ENCODE measurements at regions of chr11 and their contacts with region 1.

Region 1: DNA sequence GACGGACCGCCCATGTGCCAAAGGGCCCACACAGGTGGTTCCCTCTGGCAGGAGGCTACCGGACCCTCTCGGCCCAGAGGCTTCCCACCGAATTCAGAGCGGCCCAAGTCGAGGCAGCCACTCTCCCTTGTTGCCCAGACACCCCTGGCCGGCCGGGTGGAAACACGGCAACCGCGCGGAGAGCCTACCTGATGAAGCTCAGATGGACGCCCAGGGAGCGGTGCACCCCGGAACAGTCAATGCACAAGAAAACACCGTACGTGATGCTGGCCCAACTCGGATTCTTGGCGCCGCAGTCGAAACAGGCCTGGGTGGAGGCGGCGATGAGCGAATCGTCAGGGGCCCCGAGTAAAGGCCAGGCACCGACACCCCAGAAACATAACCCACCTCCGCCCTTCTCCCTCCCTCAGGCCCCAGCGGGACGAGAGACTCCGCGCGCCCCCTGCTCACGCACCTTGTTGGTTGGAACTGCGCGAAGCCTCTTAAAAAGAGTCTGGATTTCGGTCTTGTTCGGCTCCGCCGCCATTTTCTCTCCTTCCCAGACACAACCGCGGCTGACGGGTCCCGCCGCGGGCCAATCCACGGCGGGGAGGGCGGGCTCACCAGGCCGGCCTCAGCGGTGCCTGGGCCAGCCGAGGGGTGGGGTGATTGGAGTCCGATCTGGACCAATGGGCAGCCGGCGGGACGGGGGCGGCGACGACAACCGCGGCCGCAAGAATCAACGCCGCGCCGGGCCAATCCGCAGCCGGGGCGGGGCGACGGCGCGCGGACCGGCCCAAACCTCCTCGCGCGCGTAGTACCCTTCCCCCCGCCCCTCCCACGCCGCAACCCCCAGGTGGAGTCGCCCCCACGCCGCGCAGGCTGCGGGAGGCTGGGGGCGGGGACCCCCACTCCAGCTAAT is at the start of gene ARFGAP2:
- DNase-seq: peak; percentile 100
- H3K4me3 ChIP-seq: peak within 1 kb of the TSS; percentile 72
- H3K27ac ChIP-seq: peak within 1 kb of the TSS; percentile 93
- H3K4me1 ChIP-seq: peaks cover 16% of the 10 kb centered on the region
- H3K27me3 ChIP-seq: no peaks in the 10 kb centered on the region
- CTCF ChIP-seq: no peak
- total RNA-seq, gene ARFGAP2: 179 and 206 TPM in 2 replicates

Region 2: GRCh38 chr11:47143322-47143721 is 33.3 kb before region 1 on chr11:
- CTCF ChIA-PET with region 1: interaction called, 13 read pairs
- POLR2A ChIA-PET with region 1: no interaction called
- intact Hi-C with region 1: no loop called
- DNase-seq: no peak
- H3K4me3 ChIP-seq: no peak overlapping the region
- H3K27ac ChIP-seq: no peak overlapping the region
- H3K4me1 ChIP-seq: no peaks in the 10 kb centered on the region
- H3K27me3 ChIP-seq: no peaks in the 10 kb centered on the region
- CTCF ChIP-seq: no peak

Region 3: DNA sequence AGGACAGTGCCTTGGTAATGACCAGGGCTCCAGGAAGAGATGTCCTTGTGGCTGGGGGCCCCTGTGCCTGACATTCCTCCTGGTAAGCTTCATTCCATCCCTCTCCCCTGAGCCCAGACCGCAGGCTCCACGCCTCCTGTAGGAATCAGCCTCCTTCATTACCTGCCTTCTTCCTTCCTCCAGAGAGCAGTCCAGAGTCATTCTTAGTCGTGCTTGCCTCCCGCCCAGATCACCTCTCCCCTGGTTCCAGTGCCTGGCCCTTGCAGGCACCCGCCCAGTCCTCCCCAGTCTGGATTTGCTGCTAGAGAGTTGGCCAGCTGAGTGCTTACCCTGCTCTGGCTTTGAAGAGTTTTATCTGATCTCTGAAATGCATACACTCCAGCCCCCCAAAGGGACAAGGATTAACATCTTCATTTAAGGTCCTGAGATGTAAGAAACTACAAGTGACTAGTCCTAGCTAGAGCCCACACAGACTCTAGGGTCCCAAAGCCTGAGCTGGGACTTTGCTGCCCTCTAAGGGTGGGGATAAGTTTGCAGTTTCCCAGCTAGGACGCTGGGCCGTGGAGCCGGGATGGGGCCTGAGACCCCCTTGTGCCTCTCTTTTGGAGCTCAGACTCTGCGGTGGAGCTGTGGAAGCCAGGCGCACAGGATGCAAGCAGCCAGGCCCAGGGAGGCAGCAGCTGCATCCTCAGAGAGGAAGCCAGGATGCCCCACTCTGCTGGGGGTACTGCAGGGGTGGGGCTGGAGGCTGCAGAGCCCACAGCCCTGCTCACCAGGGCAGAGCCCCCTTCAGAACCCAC is 82.8 kb after region 1 on chr11:
- CTCF ChIA-PET with region 1: interaction called, 11 read pairs
- POLR2A ChIA-PET with region 1: no interaction called
- intact Hi-C with region 1: loop called (anchors 2 kb)
- DNase-seq: peak; percentile 79
- H3K4me3 ChIP-seq: no peak overlapping the region
- H3K27ac ChIP-seq: no peak overlapping the region
- H3K4me1 ChIP-seq: peaks cover 23% of the 10 kb centered on the region
- H3K27me3 ChIP-seq: no peaks in the 10 kb centered on the region
- CTCF ChIP-seq: peak; percentile 87

Region 4: DNA sequence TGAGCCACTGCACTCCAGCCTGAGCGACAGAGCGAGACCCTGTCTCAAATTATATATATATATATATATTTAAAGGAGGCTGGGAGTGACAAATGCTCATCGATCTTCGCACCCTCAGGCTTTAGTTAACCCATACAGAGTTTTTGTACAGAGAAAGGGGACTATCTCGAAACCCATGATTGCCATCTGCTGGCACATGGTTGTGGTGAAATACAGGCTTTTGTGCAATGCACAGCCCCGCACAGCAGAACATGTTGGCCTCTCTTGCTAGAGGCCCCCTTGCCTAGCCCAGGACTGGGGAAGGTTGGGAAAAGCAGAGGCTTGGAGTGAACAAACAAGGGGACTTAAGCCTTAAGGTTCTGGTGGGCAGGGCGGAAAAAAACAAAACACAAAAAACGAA is 172.3 kb after region 1 on chr11:
- CTCF ChIA-PET with region 1: interaction called, 4 read pairs
- POLR2A ChIA-PET with region 1: no interaction called
- intact Hi-C with region 1: loop called (anchors 1 kb)
- DNase-seq: peak; percentile 89
- H3K4me3 ChIP-seq: no peak overlapping the region
- H3K27ac ChIP-seq: no peak overlapping the region
- H3K4me1 ChIP-seq: no peaks in the 10 kb centered on the region
- H3K27me3 ChIP-seq: no peaks in the 10 kb centered on the region
- CTCF ChIP-seq: peak; percentile 70

Region 5: DNA sequence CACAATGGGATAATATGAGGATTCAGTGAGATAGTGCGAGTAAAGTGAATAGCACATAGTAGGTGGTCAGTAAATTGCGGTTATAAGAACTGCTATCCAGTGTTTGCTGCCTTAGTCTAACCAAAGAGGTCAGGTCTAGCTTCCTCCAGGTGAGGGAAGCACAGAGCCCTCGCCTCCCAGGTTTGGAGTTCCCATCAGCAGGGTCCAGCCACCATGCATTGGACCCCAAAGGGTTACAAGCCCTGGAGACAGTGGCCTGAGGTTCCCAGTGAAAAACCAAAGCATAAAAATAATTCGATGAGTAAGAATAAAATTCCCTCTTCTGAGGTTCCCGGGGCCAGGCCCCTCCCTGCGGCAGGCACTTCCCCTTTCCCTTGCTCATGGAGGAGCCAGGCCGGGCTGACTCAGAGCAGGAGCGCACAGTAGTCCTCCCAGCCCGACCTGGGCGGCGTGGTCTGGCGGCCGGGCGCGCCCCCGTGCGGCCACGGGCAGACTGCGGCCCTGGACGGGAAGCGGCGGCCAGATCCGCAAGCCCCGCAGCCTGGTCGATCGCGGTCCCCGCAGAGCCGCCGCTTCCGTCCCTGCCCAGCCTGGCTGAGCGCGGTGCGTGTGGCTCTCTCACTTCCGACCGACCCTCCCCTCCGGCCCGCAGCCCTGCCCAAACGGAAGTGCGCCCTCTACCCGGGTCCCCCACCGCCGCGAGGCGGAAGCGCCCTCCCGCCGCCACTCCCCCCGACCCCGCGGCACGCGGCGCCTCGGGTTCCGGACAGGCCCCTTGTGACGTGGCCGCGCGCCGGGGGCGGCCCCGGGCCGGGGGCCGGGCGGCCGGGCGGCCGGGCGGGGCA is 231.4 kb after region 1 on chr11 and contains the start of gene SLC39A13:
- CTCF ChIA-PET with region 1: no interaction called
- POLR2A ChIA-PET with region 1: no interaction called
- intact Hi-C with region 1: loop called (anchors 1 kb)
- DNase-seq: peak; percentile 99
- H3K4me3 ChIP-seq: peak within 1 kb of the TSS; percentile 70
- H3K27ac ChIP-seq: peak within 1 kb of the TSS; percentile 83
- H3K4me1 ChIP-seq: peaks cover 21% of the 10 kb centered on the region
- H3K27me3 ChIP-seq: no peaks in the 10 kb centered on the region
- CTCF ChIP-seq: peak; percentile 75
- total RNA-seq, gene SLC39A13: 53.3 and 64.2 TPM in 2 replicates

Region 6: GRCh38 chr11:47642099-47642855 is 465.7 kb after region 1 on chr11 and contains the start of gene MTCH2:
- CTCF ChIA-PET with region 1: no interaction called
- POLR2A ChIA-PET with region 1: interaction called, 18 read pairs
- intact Hi-C with region 1: no loop called
- DNase-seq: peak; percentile 100
- H3K4me3 ChIP-seq: peak within 1 kb of the TSS; percentile 70
- H3K27ac ChIP-seq: peak within 1 kb of the TSS; percentile 79
- H3K4me1 ChIP-seq: peaks cover 15% of the 10 kb centered on the region
- H3K27me3 ChIP-seq: no peaks in the 10 kb centered on the region
- CTCF ChIP-seq: peak; percentile 52; the same call in 1 of the 2 replicates
- total RNA-seq, gene MTCH2: 367 and 382 TPM in 2 replicates

Measured in A673 (cell line).